Dendritic cell treated with granulocyte-macrophage colony-stimulating factor and Interleukin-4, amounts not matched to agents 40 ng/mL and 50 ng/mL, for 4 days (primary cell): ENCODE measurements at regions of chr15 and their contacts with region 1.

Region 1: DNA sequence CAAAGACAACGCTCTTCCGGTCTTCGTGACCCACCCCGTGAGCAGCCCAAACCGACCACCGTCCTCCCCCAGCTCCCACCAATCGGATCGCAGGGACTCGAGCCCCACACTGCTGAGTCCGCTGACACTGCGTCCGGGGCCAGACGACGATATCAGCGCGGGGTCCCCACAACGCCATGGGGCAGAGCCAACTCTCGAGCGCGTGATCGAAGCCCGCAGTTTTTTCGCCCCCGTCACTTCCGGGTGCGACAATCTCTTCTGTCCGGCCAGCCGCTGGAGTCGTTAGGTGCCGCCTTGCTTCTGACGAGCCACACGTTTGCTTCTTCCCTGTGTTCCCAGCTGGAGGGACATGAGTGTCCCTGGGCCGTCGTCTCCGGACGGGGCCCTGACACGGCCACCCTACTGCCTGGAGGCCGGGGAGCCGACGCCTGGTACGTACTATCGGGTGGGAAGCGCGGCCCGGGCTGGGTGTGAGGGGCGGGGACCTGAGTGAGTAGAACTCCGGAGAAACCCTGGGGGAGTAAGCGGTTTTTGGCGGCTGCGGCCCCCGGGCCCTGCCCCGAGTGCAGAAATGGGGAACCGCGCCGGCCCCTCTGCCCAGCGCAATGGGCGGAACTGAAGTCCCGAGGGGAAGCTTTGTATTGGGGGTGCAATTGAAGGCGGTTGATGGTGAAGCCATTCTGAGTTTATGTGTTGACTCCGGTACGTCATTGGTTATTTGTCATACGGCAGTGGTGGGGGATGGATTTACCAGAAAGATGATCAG is at the start of gene BLOC1S6:
- H3K4me3 Mint-ChIP-seq: peak within 1 kb of the TSS; percentile 91
- H3K27ac Mint-ChIP-seq: peak within 1 kb of the TSS; percentile 99
- H3K4me1 Mint-ChIP-seq: peaks cover 51% of the 10 kb centered on the region
- H3K27me3 Mint-ChIP-seq: no peaks in the 10 kb centered on the region

Region 2: GRCh38 chr15:45604326-45604725 is 17.0 kb after region 1 on chr15:
- intact Hi-C with region 1: loop called (anchors 2 kb)
- H3K4me3 Mint-ChIP-seq: peak overlapping the region; percentile 53
- H3K27ac Mint-ChIP-seq: peak overlapping the region; percentile 89
- H3K4me1 Mint-ChIP-seq: peaks cover 50% of the 10 kb centered on the region
- H3K27me3 Mint-ChIP-seq: no peaks in the 10 kb centered on the region